ENCODE measurements at regions of chr12 and their contacts with region 1.

Region 1: DNA sequence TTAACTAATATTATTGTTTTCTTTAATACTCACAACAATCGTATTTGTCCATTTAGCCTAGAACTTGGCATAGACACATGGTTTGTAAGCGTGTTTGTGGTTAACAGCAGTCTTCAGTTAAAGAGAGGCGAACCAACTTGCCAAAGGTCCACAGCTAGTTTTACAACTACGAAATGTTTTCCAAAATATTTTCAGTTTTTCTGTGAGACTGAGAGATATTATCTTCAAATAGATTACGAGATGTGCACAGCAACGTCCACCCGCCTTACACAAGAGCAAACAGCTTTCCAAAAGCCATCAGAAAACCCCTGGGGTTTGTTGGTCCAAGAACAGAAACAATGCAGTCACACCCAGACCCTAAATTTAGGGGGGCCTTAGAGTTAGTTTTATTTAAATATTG is 58.6 kb upstream of the RASSF3 start:
- DNase-seq: no peak

Region 2: GRCh38 chr12:64610149-64610678 is 58.5 kb after region 1 on chr12 and contains the start of gene RASSF3:
- intact Hi-C with region 1: loop called (anchors 10 kb)
- DNase-seq: peak in 7 of 10 donors; percentile 16 to 89 (median 34)

Region 3: DNA sequence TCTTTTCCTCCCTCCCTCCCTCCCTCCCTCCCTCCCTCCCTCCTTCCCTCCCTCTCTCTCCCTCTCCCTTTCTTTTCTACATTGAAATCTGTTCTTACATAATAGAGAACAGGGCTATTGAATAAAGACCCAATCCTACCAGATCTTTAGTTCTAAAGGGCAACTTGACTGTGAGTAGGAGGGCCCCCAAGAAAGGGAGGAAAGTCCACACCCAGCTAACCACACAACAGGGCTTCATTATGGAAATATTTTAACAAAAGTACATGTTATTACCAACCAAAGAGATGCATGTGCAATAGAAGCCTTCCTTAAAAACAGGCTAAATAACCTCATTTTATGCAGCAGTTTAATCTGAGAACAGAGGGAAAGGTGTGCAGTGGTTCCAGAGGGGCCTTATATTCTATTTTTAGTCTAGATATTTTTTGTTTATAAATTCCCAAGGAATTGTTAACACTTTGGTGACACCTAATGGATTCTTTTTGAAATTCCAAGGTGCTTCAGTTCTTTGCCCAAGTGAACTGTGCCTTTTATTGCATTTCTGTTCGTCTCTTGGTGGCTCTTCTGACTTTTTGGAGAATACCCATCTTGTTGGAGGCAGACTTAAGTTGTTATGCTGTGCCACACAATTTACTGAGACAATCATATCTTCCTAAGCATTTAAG is 144.5 kb after region 1 on chr12:
- intact Hi-C with region 1: loop called (anchors 1 kb)
- DNase-seq: no peak

Measured in posterior cingulate gyrus (tissue), 11 donors.